ENCODE measurements at regions of chr18 and their contacts with region 1.

Region 1: DNA sequence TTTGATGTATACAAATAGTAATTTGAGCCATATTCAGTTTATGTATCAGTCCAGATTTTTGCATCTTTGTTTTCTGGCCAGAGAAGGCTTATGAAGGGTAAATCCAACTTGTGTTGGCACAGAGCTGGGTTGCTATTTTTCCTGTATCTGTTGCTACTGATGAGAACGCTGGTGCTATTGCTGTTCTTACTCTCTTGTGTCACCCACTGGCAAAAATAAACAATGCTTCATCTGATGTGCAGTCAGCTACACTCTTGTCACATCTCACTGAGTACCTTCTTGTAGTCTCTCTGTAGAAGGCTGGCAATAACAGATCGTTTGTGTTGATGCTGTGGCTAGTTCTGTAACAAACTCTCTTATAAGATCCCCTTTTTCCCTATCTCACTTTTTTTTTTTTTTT is 323.4 kb downstream of the CDH19 start:
- DNase-seq: no peak

Region 2: GRCh38 chr18:66124394-66124793 is 156.1 kb before region 1 on chr18:
- intact Hi-C with region 1: loop called (anchors 2 kb)
- DNase-seq: no peak

Measured in cardiac septum (tissue), 1 donor.